ENCODE measurements at regions of chr1 and their contacts with region 1.

Region 1: GRCh38 chr1:225652729-225653462 is at the start of gene ENAH:
- DNase-seq: peak; percentile 86 to 93
- ATAC-seq: peak; percentile 87
- H3K4me3 ChIP-seq: peak within 1 kb of the TSS; percentile 100
- H3K27ac ChIP-seq: peak within 1 kb of the TSS; percentile 94 to 99
- H3K4me1 ChIP-seq: peaks cover 0 to 4% of the 10 kb centered on the region in 2 donors
- H3K27me3 ChIP-seq: no peaks in the 10 kb centered on the region
- total RNA-seq, gene ENAH: 148 to 415 TPM

Region 2: GRCh38 chr1:225480825-225481434 is 172.0 kb before region 1 on chr1:
- intact Hi-C with region 1: loop called in 1 of 2 experiments (anchors 5 kb)
- DNase-seq: peak; percentile 48 to 79
- ATAC-seq: peak; percentile 42
- H3K4me3 ChIP-seq: no peak overlapping the region
- H3K27ac ChIP-seq: no peak overlapping the region
- H3K4me1 ChIP-seq: peaks cover 0 to 2% of the 10 kb centered on the region in 2 donors
- H3K27me3 ChIP-seq: no peaks in the 10 kb centered on the region

Region 3: GRCh38 chr1:225694151-225694603 is 41.3 kb after region 1 on chr1:
- intact Hi-C with region 1: loop called (anchors 5 kb)
- DNase-seq: no peak
- ATAC-seq: peak; percentile 88
- H3K4me3 ChIP-seq: no peak overlapping the region
- H3K27ac ChIP-seq: peak overlapping the region; percentile 49 to 97
- H3K4me1 ChIP-seq: peaks cover 10 to 11% of the 10 kb centered on the region in 2 donors
- H3K27me3 ChIP-seq: no peaks in the 10 kb centered on the region

Region 4: GRCh38 chr1:225772323-225772768 is 119.5 kb after region 1 on chr1:
- intact Hi-C with region 1: loop called (anchors 5 kb)
- DNase-seq: peak; percentile 87 to 91
- ATAC-seq: peak; percentile 88
- H3K4me3 ChIP-seq: no peak overlapping the region
- H3K27ac ChIP-seq: no peak overlapping the region
- H3K4me1 ChIP-seq: peaks cover 0 to 2% of the 10 kb centered on the region in 2 donors
- H3K27me3 ChIP-seq: no peaks in the 10 kb centered on the region

Measured in aorta (tissue), 5 donors.